ENCODE measurements at regions of chr6 and their contacts with region 1.

Region 1: DNA sequence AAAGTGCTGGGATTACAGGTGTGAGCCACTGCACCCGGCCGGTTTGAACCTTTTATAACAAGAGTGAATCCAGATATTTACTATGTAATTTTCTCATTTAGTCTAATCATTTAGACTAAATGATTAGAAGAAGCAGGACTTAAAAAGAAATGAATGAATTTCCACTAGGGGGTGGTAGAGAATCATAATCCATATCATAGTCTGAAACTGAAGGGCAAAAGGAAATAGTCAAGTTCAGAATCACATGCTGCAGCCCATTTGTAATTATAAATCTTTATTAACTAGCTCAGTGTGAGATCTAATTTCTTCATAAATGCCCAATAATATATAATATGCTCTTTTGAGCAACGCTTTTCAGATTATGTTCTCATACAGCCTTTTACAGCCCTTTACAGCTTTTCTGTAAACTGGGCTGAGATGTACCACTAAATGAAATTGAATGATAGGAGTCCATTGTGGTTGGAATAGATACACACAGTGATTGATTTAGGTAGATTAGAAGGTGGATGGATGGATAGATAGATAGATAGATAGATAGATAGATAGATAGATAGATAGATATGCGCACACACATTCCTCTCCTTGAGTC is 31.8 kb downstream of the PSMB9 start:
- DNase-seq: no peak
- H3K4me3 ChIP-seq: no peak overlapping the region
- H3K27ac ChIP-seq: no peak overlapping the region
- H3K4me1 ChIP-seq: no peaks in the 10 kb centered on the region
- H3K27me3 ChIP-seq: no peaks in the 10 kb centered on the region
- CTCF ChIP-seq: peak in 2 of 3 experiments; percentile 25 to 38; a peak in 2 of 4 replicates
- EP300 ChIP-seq: no peak
- POLR2A ChIP-seq: no peak
- RAD21 ChIP-seq: peak; percentile 63 to 67

Region 2: DNA sequence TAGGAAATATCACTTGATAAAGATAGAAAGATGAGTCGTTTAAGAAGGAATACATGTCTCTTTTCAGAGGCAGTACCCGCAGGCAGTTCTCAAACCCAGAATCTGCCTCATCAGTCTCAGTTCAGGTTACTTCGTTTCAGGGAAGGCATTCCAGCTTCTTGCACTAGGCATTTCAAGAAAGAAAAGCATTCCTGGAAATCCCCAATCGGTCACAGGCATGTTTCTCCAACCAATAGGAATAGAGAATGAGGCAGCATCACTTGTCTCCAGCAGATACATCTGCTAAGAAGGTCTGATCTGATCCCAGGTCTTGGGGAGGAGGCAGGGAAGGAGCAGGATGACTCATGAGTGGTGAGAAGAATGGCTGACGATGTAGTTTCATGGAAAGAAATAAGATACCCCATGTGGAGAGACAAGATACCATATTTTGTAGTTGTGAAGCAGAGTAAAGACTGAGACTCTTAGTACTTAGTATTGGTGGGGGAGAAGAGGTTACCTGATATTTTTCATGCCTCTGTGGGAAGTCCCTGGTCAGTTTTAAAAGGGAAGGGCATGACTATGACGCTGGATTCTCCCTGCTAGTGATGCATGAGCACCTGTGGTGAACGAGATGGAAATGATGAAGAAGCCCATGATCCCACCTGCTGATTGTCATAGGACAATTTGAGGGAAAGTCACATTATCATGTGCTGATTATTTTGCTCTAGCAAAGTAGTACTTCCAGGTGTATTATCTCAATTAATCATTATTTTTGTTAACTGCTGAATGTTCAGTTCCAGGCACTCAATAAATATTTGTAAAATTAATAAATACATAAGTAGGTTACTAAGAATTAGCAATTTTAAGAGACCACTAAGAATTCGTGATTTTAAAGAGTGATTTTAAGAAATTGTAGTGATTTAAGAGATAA is 275.8 kb before region 1 on chr6:
- CTCF ChIA-PET with region 1: no interaction called
- POLR2A ChIA-PET with region 1: no interaction called
- DNase-seq: peak; percentile 58 to 68
- H3K4me3 ChIP-seq: peak overlapping the region in 2 of 4 experiments; percentile 36 to 47; a peak in 3 of 8 replicates
- H3K27ac ChIP-seq: peak overlapping the region; percentile 75; the same call in 1 of the 2 replicates
- H3K4me1 ChIP-seq: no peaks in the 10 kb centered on the region; a peak in 1 of 7 replicates
- H3K27me3 ChIP-seq: no peaks in the 10 kb centered on the region
- CTCF ChIP-seq: no peak
- EP300 ChIP-seq: no peak
- POLR2A ChIP-seq: peak in 1 of 2 experiments; percentile 40; a peak in 1 of 3 replicates
- RAD21 ChIP-seq: no peak

Region 3: GRCh38 chr6:32912951-32913350 is 27.2 kb after region 1 on chr6:
- CTCF ChIA-PET with region 1: interaction called, 12 read pairs
- POLR2A ChIA-PET with region 1: no interaction called
- DNase-seq: no peak
- H3K4me3 ChIP-seq: no peak overlapping the region
- H3K27ac ChIP-seq: no peak overlapping the region
- H3K4me1 ChIP-seq: no peaks in the 10 kb centered on the region
- H3K27me3 ChIP-seq: peaks cover 0 to 1% (median 0%) of the 10 kb centered on the region in 4 experiments; a peak in 1 of 7 replicates
- CTCF ChIP-seq: no peak
- EP300 ChIP-seq: no peak
- POLR2A ChIP-seq: no peak
- RAD21 ChIP-seq: no peak

Region 4: DNA sequence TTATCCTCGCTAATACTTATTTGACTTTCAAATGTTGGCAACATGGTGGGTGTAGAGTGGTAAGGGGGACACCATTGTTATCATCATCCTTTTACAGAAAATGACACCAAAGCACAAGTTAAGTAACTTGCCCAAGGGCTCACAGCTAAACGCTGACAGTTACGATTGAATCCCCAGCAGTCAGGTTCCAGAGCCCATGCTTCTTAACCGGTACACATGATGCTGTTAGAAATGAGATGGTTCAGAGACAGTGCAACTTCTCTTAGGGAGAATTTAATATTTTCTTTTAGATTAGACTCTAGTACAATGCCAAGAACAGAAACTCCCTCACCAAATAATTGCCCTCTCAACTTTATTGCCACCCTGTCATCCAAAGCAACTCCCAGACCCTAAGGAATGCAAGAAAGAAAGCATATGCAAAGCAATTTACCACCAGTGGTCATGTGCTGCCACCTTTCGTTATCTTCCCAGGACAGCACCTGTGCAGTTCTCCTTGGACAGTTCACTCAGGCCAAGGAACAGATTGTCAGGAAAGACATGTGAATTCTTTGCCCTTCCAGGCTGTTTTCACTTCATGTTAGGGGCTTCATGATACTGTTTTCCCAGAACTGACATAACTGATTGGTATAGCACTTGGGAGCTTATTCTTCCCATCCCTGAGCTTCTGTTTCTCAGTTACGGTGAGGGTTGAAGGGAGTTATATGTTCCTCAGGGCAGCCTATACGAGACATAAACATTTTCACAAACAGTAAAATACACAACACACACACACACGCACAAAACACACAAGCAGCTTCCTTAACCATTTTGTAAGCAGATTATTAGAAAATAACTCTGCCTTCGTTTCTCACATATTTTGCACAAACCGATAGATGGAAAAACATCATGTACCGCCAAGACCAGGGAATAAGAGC is 62.0 kb after region 1 on chr6:
- CTCF ChIA-PET with region 1: interaction called, 15 read pairs
- POLR2A ChIA-PET with region 1: interaction called, 4 read pairs
- DNase-seq: peak; percentile 15 to 63
- H3K4me3 ChIP-seq: no peak overlapping the region
- H3K27ac ChIP-seq: no peak overlapping the region
- H3K4me1 ChIP-seq: peaks cover 0 to 8% (median 3%) of the 10 kb centered on the region in 4 experiments; a peak in 5 of 7 replicates
- H3K27me3 ChIP-seq: no peaks in the 10 kb centered on the region; a peak in 1 of 7 replicates
- CTCF ChIP-seq: peak; percentile 60 to 92 (median 91)
- EP300 ChIP-seq: no peak
- POLR2A ChIP-seq: no peak
- RAD21 ChIP-seq: peak; percentile 95 to 96

Region 5: DNA sequence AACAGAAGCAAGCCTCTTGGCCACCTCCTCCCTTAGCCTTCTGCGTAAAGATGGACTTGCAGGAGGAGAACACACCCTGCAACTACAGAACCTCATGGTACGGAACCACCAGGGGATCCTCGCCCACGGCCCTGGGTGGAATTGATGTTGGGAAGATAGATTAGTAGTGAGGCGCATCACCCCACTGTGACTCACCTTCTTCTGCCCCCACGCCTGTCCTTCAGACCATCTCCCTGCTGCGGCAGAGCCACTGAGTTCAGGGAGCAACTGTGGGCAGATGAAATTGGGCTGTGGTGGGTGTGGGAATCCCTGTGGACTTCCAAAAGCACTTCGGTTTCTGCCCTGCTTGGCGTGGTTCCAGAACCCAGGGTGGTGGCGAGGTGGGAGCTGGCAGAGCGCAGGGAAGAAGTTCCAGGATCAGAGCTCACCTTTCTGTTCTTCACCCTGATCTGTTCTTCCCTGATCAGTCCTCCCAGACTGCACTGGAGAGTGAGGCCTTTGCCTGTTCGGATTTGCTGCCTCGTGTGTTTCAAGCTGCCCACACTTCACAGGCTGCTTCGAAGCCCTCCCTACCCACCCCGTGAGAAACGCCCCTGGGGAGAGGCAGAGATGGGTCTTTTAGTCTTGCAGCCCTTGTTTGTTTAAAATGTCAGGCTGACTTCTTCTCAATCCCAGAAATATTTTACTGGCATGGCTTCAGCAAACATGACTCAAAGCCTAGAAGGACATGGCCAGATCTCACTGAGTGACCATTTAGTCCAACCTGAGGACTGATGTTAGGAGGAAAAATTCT is 1010.8 kb after region 1 on chr6:
- CTCF ChIA-PET with region 1: no interaction called
- POLR2A ChIA-PET with region 1: no interaction called
- DNase-seq: no peak
- H3K4me3 ChIP-seq: no peak overlapping the region
- H3K27ac ChIP-seq: no peak overlapping the region
- H3K4me1 ChIP-seq: no peaks in the 10 kb centered on the region; a peak in 1 of 7 replicates
- H3K27me3 ChIP-seq: peaks cover 0 to 3% (median 0%) of the 10 kb centered on the region in 4 experiments; a peak in 2 of 7 replicates
- CTCF ChIP-seq: no peak
- EP300 ChIP-seq: no peak
- POLR2A ChIP-seq: no peak
- RAD21 ChIP-seq: no peak

Measured in H1 (cell line).